ENCODE measurements at regions of chr4 and their contacts with region 1.

Region 1: GRCh38 chr4:72567821-72568675 is 973 bp downstream of the ADAMTS3 start:
- DNase-seq: peak; percentile 32
- H3K4me3 ChIP-seq: peak overlapping the region; percentile 23 to 59 (median 36)
- H3K27ac ChIP-seq: peak overlapping the region; percentile 61 to 82 (median 69)
- H3K4me1 ChIP-seq: peaks cover 0 to 23% (median 10%) of the 10 kb centered on the region in 4 donors
- H3K27me3 ChIP-seq: peaks cover 36% of the 10 kb centered on the region
- CTCF ChIP-seq: peak in 2 of 5 experiments; percentile 11 to 25
- EP300 ChIP-seq: no peak
- POLR2A ChIP-seq: no peak

Region 2: GRCh38 chr4:70839589-70840093 is 1728.4 kb before region 1 on chr4 and contains the start of gene GRSF1:
- in situ Hi-C with region 1: no loop called
- intact Hi-C with region 1: loop called (anchors 5 kb)
- DNase-seq: peak; percentile 96
- H3K4me3 ChIP-seq: peak within 1 kb of the TSS; percentile 82 to 98 (median 90)
- H3K27ac ChIP-seq: peak within 1 kb of the TSS; percentile 95 to 99 (median 98)
- H3K4me1 ChIP-seq: peaks cover 4 to 26% (median 8%) of the 10 kb centered on the region in 4 donors
- H3K27me3 ChIP-seq: no peaks in the 10 kb centered on the region
- CTCF ChIP-seq: no peak
- EP300 ChIP-seq: no peak
- POLR2A ChIP-seq: peak; percentile 80
- total RNA-seq, gene GRSF1: 42.6 to 63.2 (median 60.8) TPM